Activated CD4-positive, alpha-beta memory T cell treated with anti-CD3 and anti-CD28 coated beads for 36 hours (primary cell): ENCODE measurements at regions of chr3 and their contacts with region 1.

Region 1: GRCh38 chr3:192802957-192803899 is 75.9 kb upstream of the FGF12 start:
- DNase-seq: no peak
- H3K4me3 Mint-ChIP-seq: no peak overlapping the region
- H3K27ac Mint-ChIP-seq: no peak overlapping the region
- H3K4me1 Mint-ChIP-seq: no peaks in the 10 kb centered on the region
- H3K27me3 Mint-ChIP-seq: no peaks in the 10 kb centered on the region

Region 2: GRCh38 chr3:192467230-192468140 is 335.7 kb before region 1 on chr3:
- CTCF ChIA-PET with region 1: interaction called, 3 read pairs
- POLR2A ChIA-PET with region 1: no interaction called
- intact Hi-C with region 1: loop called (anchors 1 kb)
- DNase-seq: peak; percentile 57
- H3K4me3 Mint-ChIP-seq: no peak overlapping the region
- H3K27ac Mint-ChIP-seq: no peak overlapping the region
- H3K4me1 Mint-ChIP-seq: no peaks in the 10 kb centered on the region
- H3K27me3 Mint-ChIP-seq: peaks cover 18% of the 10 kb centered on the region

Region 3: DNA sequence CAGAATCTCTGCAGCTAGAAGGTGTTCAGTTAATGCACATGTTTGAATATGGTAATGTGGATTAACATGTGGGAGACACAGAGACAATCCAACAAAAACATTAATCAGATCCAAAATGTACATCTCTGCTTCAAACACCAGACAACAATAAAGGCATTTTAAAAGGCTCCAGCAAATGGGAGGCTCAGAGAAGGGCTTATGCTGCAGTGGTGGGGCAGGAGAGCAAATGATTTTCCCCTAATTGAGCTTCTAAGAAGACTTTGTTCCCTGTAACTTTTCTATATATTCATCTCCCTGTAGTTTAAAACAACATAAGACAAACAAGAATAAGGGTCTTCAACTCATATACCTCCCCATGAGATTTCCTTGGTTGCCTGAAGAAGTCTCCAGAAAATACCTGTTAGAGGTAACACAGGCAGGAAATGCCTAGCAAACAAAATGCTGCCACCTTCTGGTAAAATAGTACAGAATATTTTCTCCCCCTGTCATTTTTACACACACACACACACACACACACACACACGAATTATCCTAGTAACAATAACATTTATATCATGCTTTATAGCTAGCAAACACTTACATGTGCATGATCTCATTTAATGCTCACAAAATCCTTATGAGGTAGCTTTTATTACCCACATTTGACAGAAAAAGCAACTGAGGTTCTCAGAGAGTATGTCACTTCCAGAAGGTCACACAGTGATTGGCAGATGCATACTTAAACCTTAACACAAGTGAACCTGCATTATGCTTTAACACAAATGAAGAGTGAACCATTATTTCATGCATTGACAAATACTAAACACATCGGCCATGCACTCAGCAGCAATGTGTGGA is 237.8 kb after region 1 on chr3:
- CTCF ChIA-PET with region 1: interaction called, 13 read pairs
- POLR2A ChIA-PET with region 1: no interaction called
- intact Hi-C with region 1: no loop called
- DNase-seq: no peak
- H3K4me3 Mint-ChIP-seq: no peak overlapping the region
- H3K27ac Mint-ChIP-seq: no peak overlapping the region
- H3K4me1 Mint-ChIP-seq: no peaks in the 10 kb centered on the region
- H3K27me3 Mint-ChIP-seq: no peaks in the 10 kb centered on the region